ENCODE measurements at regions of chr6 and their contacts with region 1.

Region 1: DNA sequence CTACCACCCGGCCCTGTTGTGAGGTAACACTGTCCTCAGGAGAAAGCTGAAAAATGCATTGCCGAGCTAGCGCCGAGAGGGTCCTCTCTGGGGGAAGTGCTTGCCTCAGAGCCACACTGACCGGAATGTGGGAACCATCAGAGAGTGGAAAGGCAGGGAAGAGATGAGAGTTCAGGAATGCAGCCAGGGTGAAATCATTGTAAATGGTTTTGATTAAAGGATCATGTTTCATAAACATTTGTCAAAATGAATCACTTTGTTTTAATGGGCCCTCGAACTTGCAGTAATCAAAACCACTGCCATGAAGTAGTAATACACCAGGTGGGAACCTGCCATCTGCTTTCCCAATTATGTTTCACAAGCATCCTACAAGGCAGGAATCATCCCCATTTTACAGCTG is 16.9 kb upstream of the IL17F start:
- DNase-seq: no peak
- H3K27ac ChIP-seq: no peak overlapping the region
- CTCF ChIP-seq: no peak

Region 2: DNA sequence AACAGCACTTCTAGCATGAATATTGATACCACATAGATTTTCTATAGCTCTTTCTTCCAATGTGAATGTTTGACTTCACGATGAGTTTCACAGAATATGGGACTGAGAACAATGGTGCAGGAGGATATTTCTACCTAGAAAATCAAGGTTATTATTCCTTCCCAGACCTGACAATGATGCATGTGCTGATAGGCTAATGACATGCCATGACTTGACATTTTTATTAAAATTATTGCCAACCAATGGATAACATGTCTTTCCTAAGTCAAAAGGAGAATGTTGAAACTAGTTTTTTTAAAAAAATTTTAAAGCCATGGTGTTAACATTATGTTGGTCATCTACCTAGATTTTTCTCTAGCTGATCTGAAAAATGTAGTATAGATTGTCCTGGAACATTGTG is 74.1 kb before region 1 on chr6:
- CTCF ChIA-PET with region 1: interaction called, 14 read pairs
- POLR2A ChIA-PET with region 1: no interaction called
- DNase-seq: no peak
- H3K27ac ChIP-seq: no peak overlapping the region
- CTCF ChIP-seq: no peak

Region 3: DNA sequence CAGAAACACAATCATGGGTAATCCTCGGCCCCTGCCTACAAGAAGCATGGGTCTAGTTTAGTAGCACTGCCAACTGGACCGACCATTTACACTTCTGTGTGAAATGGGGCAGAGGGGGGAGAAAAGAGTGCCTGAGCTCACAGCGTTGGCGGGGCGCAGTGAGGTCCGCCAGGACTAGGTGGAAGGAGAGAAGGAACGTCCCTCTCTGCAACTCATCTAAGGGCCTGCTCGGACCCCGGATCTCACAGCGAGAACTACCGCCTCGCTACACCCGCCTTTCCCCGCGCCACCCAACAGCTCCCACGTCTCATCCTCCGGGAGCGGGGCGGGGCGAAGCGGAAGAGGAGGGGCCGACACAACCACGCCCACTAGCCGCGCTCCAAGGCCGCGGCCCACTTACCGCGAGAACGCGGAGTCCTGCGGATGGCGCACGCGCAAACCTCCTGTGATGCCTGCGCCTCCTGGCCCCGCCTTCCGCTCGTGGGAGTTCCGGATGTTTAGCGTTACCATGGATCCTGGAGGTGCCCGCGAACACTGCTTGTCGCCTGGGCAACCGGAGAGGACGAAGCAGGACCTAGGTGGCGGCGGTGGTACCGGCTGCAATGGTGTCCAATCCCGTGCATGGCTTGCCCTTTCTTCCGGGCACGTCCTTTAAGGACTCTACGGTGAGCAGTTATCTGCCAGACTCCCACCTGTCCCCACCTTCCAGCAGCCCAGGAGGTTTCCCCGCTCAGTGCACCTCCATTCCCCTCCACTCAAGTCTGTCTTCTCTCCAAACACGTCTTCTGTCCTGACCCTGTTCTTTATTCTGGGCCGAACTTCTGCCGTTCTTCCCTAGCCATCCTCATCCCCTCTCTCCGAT is 158.8 kb after region 1 on chr6 and contains the start of gene EFHC1:
- CTCF ChIA-PET with region 1: no interaction called
- POLR2A ChIA-PET with region 1: no interaction called
- DNase-seq: peak; percentile 96
- H3K27ac ChIP-seq: peak within 1 kb of the TSS; percentile 91
- CTCF ChIP-seq: no peak

Region 4: GRCh38 chr6:52788478-52788877 is 527.2 kb after region 1 on chr6:
- CTCF ChIA-PET with region 1: no interaction called
- POLR2A ChIA-PET with region 1: no interaction called
- DNase-seq: no peak
- H3K27ac ChIP-seq: no peak overlapping the region
- CTCF ChIP-seq: no peak